ENCODE measurements at regions of chr6 and their contacts with region 1.

Region 1: DNA sequence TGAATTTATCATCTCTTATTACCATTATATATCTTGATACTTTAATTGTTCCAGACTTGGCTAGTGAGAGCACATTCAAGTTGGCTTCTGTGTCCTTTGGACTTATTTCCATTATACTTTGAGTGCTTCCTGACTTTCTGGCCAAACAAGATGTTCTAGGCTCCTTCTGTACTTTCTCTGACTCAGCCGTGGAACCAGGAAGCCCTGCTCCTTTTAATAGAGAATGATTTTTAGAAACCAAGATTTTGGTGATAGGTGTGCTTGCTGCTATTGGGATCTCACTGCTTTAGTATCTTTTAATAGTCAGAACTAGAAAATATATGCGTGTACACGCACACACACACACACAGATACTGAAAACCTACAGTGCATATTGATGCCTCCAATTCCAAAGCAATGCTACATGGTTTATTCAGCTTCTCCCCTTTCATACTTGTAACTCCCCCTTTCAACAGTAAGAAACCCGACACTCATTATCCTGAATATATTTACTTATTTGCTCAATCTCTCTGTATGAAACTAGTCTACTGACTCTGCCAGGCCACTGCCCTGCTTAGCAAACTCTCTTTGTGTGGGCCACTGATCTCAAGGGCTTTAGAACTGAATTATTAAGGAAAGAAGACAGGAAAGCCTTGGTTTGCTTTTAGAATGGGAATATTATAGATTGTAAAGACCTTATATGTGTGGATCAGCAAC is 42.7 kb upstream of the EZR start:
- DNase-seq: no peak
- ATAC-seq: peak; percentile 21; the same call in 1 of the 2 replicates
- H3K4me3 ChIP-seq: no peak overlapping the region
- H3K27ac ChIP-seq: peak overlapping the region; percentile 31; the same call in 1 of the 2 replicates
- H3K4me1 ChIP-seq: peaks cover 62 to 89% of the 10 kb centered on the region in 2 experiments
- H3K27me3 ChIP-seq: no peaks in the 10 kb centered on the region
- CTCF ChIP-seq: no peak
- POLR2A ChIP-seq: no peak
- RAD21 ChIP-seq: no peak

Region 2: DNA sequence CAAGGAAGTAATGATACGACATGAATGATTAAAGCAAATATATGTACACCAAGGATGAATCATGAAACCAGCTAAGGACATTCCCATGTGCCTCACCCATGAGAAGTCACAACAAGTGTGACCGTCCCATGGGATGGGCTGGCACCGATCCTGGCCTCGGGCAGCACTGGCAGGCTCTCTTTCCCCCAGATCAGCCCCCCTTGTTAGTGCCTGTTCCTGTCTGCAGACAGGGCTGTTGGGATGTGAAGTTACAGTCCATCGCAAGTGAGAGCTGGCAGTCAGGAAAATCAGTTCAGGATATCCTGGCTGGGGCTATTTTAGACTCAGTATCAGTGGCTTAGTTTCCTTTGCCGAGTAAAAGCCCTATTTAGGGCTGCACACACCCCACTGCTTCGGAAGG is 1168.0 kb before region 1 on chr6:
- CTCF ChIA-PET with region 1: no interaction called
- POLR2A ChIA-PET with region 1: no interaction called
- RAD21 ChIA-PET with region 1: no interaction called
- intact Hi-C with region 1: no loop called
- DNase-seq: no peak
- ATAC-seq: no peak
- H3K4me3 ChIP-seq: no peak overlapping the region
- H3K27ac ChIP-seq: no peak overlapping the region
- H3K4me1 ChIP-seq: peaks cover 0 to 8% of the 10 kb centered on the region in 2 experiments; a peak in 1 of 4 replicates
- H3K27me3 ChIP-seq: no peaks in the 10 kb centered on the region
- CTCF ChIP-seq: no peak
- POLR2A ChIP-seq: no peak
- RAD21 ChIP-seq: no peak

Region 3: DNA sequence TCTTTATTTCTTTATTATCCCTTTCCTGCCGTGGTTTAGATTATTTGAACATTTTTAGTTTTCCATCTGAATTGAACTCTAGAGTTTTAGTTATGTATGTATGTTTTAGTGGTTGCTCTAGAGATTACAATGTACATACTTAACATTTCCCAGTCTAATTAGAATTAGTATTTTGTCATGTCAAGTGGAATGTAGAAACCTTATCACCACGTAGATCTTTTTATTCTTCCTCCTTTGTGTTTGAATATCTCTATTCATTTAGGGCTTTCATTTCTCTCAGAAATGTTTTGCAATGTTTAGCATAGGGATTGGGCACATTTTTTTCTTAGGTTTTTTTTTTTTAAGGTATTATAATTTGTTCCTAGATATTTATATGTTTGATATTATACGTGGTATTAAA is 30.4 kb after region 1 on chr6:
- CTCF ChIA-PET with region 1: no interaction called
- POLR2A ChIA-PET with region 1: no interaction called
- RAD21 ChIA-PET with region 1: no interaction called
- intact Hi-C with region 1: no loop called
- DNase-seq: no peak
- ATAC-seq: no peak
- H3K4me3 ChIP-seq: no peak overlapping the region
- H3K27ac ChIP-seq: no peak overlapping the region
- H3K4me1 ChIP-seq: peaks cover 17 to 50% of the 10 kb centered on the region in 2 experiments
- H3K27me3 ChIP-seq: no peaks in the 10 kb centered on the region
- CTCF ChIP-seq: no peak
- POLR2A ChIP-seq: no peak
- RAD21 ChIP-seq: no peak

Region 4: DNA sequence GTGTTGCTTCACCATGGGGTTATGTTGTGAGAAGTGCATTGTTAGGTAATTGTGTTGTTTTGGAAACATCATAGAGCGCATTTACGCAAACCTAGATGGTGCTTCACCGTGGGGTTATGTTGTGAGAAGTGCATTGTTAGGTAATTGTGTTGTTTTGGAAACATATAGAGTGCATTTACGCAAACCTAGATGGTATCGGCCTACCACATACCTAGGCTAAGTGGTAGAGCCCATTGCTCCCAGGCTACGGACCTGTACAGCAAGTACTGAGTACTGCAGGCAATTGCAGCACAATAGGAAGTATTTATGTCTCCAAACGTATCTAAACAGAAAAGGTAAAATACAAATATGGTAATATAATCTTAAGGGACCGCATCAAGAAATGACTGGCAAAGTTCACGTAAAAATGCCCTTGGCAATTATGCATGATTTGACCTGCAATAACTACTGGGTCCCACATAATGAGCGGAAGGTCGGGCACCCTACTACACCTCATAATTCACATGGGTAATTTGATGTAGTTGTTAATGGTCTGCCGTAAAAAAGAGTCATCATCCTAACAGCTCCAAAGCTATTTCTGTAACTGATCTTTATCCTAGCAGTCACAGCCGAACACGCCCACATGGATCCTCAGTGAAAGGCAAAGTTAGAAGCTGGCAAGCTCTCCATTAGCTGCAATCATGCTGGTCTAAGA is 62.1 kb after region 1 on chr6:
- CTCF ChIA-PET with region 1: no interaction called
- POLR2A ChIA-PET with region 1: no interaction called
- RAD21 ChIA-PET with region 1: interaction called in 1 of 2 experiments, 4 read pairs
- intact Hi-C with region 1: loop called (anchors 1 kb)
- DNase-seq: no peak
- ATAC-seq: no peak
- H3K4me3 ChIP-seq: no peak overlapping the region
- H3K27ac ChIP-seq: no peak overlapping the region
- H3K4me1 ChIP-seq: peaks cover 7 to 38% of the 10 kb centered on the region in 2 experiments; a peak in 3 of 4 replicates
- H3K27me3 ChIP-seq: no peaks in the 10 kb centered on the region
- CTCF ChIP-seq: no peak
- POLR2A ChIP-seq: no peak
- RAD21 ChIP-seq: no peak